GM12878 (cell line): ENCODE measurements at regions of chr18 and their contacts with region 1.

Region 1: DNA sequence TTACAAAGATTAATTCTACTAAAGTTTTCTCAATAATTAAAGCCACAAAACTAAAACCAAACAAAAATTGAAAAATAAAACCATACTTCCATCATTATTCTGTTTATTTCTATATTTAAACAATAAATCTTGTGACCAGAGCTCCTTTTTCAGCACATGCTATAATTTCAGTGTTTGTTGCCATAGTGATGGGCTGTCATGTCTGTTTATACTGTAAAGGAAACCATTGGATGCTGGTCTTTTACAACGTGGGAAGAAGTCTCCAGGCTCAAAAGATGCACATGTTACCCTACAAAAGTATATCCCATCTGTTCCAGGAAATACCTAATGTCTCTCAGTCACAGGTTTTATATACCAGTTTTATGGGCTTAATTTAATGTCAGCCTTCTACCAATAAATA is 100.1 kb upstream of the MC2R start:
- DNase-seq: no peak
- ATAC-seq: no peak
- H3K4me3 ChIP-seq: no peak overlapping the region
- H3K27ac ChIP-seq: no peak overlapping the region
- H3K4me1 ChIP-seq: no peaks in the 10 kb centered on the region
- H3K27me3 ChIP-seq: no peaks in the 10 kb centered on the region
- CTCF ChIP-seq: no peak
- EP300 ChIP-seq: no peak
- POLR2A ChIP-seq: no peak
- RAD21 ChIP-seq: no peak

Region 2: DNA sequence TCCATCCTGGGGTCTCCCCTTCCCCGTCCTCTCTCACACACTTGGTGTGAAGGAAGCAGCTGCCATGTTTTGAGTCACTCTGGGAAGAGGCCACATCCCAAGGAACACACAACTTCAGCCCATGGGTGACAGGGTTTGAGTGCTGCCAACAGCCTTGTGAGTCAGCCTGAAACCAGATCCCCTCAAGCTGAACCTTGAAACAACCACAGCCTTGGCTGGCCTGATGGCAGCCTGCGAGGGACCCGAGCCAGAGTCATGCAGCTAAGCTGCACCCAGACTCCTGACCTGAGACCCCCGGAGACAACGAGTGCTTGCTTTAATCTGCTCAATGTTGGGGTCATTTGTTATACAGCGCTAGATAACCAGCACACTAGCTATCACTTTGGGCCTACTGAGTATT is 80.7 kb before region 1 on chr18:
- CTCF ChIA-PET with region 1: no interaction called
- POLR2A ChIA-PET with region 1: no interaction called
- RAD21 ChIA-PET with region 1: no interaction called
- SMC1A ChIA-PET with region 1: no interaction called
- in situ Hi-C with region 1: no loop called
- intact Hi-C with region 1: loop called (anchors 10 kb)
- DNase-seq: no peak
- ATAC-seq: 0 out of 3 replicates have a peak, but pooled peaks have one; percentile 27
- H3K4me3 ChIP-seq: no peak overlapping the region
- H3K27ac ChIP-seq: no peak overlapping the region
- H3K4me1 ChIP-seq: no peaks in the 10 kb centered on the region
- H3K27me3 ChIP-seq: no peaks in the 10 kb centered on the region; a peak in 2 of 4 replicates
- CTCF ChIP-seq: no peak
- EP300 ChIP-seq: no peak
- POLR2A ChIP-seq: no peak
- RAD21 ChIP-seq: no peak

Region 3: DNA sequence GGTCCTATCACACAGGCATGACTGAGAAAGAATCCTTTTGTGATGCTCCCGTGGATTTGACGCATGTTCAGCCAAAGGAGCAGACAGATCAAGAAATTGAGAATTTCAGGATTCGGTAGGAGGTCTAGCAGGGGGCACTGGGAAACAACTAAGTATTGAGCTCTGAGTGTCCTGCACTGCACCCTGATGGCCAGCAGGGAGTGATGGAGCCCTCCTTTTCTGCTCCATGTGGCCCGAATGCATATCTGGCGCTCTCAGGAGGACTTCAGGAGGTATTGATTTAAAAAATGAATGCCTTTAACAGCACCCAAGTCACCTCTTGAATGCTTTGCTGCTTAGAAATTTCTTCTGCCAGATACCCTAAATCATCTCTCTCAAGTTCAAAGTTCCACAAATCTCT is 58.8 kb after region 1 on chr18:
- CTCF ChIA-PET with region 1: no interaction called
- POLR2A ChIA-PET with region 1: no interaction called
- RAD21 ChIA-PET with region 1: no interaction called
- SMC1A ChIA-PET with region 1: no interaction called
- in situ Hi-C with region 1: loop called (anchors 10 kb)
- intact Hi-C with region 1: no loop called
- DNase-seq: no peak
- ATAC-seq: peak; percentile 71
- H3K4me3 ChIP-seq: no peak overlapping the region
- H3K27ac ChIP-seq: no peak overlapping the region
- H3K4me1 ChIP-seq: no peaks in the 10 kb centered on the region
- H3K27me3 ChIP-seq: no peaks in the 10 kb centered on the region
- CTCF ChIP-seq: peak; percentile 8 to 37 (median 24); a peak in 2 of 6 replicates
- EP300 ChIP-seq: no peak
- POLR2A ChIP-seq: no peak
- RAD21 ChIP-seq: 0 out of 2 replicates have a peak, but pooled peaks have one; percentile 25